ENCODE measurements at regions of chr12 and their contacts with region 1.

Region 1: GRCh38 chr12:110330544-110330943 is 49.5 kb downstream of the ATP2A2 start:
- DNase-seq: no peak
- ATAC-seq: no peak
- H3K4me3 ChIP-seq: no peak overlapping the region
- H3K27ac ChIP-seq: no peak overlapping the region
- H3K4me1 ChIP-seq: no peaks in the 10 kb centered on the region
- H3K27me3 ChIP-seq: no peaks in the 10 kb centered on the region
- CTCF ChIP-seq: no peak
- EP300 ChIP-seq: no peak
- POLR2A ChIP-seq: no peak
- RAD21 ChIP-seq: no peak

Region 2: DNA sequence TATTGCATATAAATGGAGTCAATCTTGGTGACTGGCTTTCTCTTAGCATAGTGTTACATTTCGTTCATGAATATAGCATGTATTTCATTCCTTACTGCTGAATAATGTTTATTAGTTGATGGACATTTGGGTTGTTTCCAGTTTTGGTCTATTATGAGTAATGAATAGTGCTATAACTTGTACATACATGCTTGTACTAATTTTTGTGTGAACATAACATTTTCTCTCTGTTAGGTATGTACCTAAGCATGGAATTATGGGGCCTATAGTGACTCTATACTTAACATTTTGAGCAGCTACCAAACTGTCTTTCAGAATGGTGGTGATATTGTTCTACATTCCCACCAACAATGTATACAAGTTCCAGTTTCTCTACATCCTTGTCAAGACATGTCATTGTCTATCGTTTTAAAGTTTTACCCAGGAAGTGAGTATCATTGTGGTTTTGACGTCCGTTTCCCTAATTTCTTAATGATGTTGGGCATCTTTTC is 26.4 kb before region 1 on chr12:
- CTCF ChIA-PET with region 1: no interaction called
- POLR2A ChIA-PET with region 1: no interaction called
- in situ Hi-C with region 1: loop called (anchors 5 kb)
- intact Hi-C with region 1: no loop called
- DNase-seq: no peak
- ATAC-seq: no peak
- H3K4me3 ChIP-seq: no peak overlapping the region
- H3K27ac ChIP-seq: no peak overlapping the region
- H3K4me1 ChIP-seq: peaks cover 17% of the 10 kb centered on the region; the same call in 1 of the 2 replicates
- H3K27me3 ChIP-seq: no peaks in the 10 kb centered on the region
- CTCF ChIP-seq: no peak
- EP300 ChIP-seq: no peak
- POLR2A ChIP-seq: no peak
- RAD21 ChIP-seq: no peak

Region 3: DNA sequence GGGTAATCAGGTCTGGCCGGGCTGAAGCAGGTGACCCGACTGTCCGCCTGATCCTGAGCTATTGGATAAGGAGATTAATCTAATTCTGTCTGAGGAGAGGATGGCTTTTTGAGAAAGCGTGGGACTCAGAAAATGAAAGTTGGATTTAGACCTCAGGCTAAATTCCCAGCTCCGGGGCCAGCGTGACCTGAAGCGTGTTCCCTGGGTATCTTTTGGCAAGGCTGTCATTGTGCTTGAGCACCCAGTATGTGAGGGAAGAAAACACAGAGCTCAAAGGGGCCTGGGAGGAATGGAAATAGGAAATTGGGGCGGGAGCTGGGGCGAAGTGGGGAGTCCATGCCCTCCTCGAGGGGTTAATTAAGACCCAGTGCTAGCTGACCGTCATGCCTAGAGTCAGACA is 498.7 kb after region 1 on chr12:
- CTCF ChIA-PET with region 1: no interaction called
- POLR2A ChIA-PET with region 1: no interaction called
- in situ Hi-C with region 1: no loop called
- intact Hi-C with region 1: no loop called
- DNase-seq: no peak
- ATAC-seq: no peak
- H3K4me3 ChIP-seq: no peak overlapping the region
- H3K27ac ChIP-seq: no peak overlapping the region
- H3K4me1 ChIP-seq: peaks cover 25% of the 10 kb centered on the region
- H3K27me3 ChIP-seq: no peaks in the 10 kb centered on the region; a peak in 1 of 5 replicates
- CTCF ChIP-seq: no peak
- EP300 ChIP-seq: no peak
- POLR2A ChIP-seq: no peak
- RAD21 ChIP-seq: no peak